ENCODE measurements at regions of chr12 and their contacts with region 1.

Region 1: GRCh38 chr12:109713187-109713984 is at the start of gene FAM222A:
- DNase-seq: peak; percentile 99
- H3K4me3 Mint-ChIP-seq: peak within 1 kb of the TSS; percentile 69
- H3K27ac Mint-ChIP-seq: no peak within 1 kb of the TSS
- H3K4me1 Mint-ChIP-seq: peaks cover 29% of the 10 kb centered on the region
- H3K27me3 Mint-ChIP-seq: peaks cover 35% of the 10 kb centered on the region
- CTCF ChIP-seq: no peak
- total RNA-seq, gene FAM222A: 2.4 and 3.1 TPM in 2 replicates

Region 2: GRCh38 chr12:109597795-109598427 is 115.5 kb before region 1 on chr12:
- CTCF ChIA-PET with region 1: interaction called, 12 read pairs
- intact Hi-C with region 1: loop called (anchors 5 kb)
- DNase-seq: peak; percentile 93
- H3K4me3 Mint-ChIP-seq: no peak overlapping the region
- H3K27ac Mint-ChIP-seq: no peak overlapping the region
- H3K4me1 Mint-ChIP-seq: no peaks in the 10 kb centered on the region
- H3K27me3 Mint-ChIP-seq: no peaks in the 10 kb centered on the region
- CTCF ChIP-seq: peak; percentile 94

Measured in Calu3 (cell line).